Natural killer cell (primary cell): ENCODE measurements at regions of chr20 and their contacts with region 1.

Region 1: GRCh38 chr20:18909254-18909653 is 95.7 kb downstream of the SCP2D1 start:
- DNase-seq: no peak
- ATAC-seq: no peak
- H3K4me3 ChIP-seq: no peak overlapping the region
- H3K4me3 Mint-ChIP-seq: no peak overlapping the region
- H3K27ac ChIP-seq: no peak overlapping the region
- H3K27ac Mint-ChIP-seq: no peak overlapping the region
- H3K4me1 ChIP-seq: no peaks in the 10 kb centered on the region
- H3K4me1 Mint-ChIP-seq: no peaks in the 10 kb centered on the region
- H3K27me3 ChIP-seq: peaks cover 2% of the 10 kb centered on the region
- H3K27me3 Mint-ChIP-seq: peaks cover 17 to 23% of the 10 kb centered on the region in 2 donors
- CTCF ChIP-seq: no peak

Region 2: GRCh38 chr20:18705490-18705889 is 203.8 kb before region 1 on chr20:
- intact Hi-C with region 1: no loop called
- DNase-seq: no peak
- ATAC-seq: no peak
- H3K4me3 ChIP-seq: no peak overlapping the region
- H3K4me3 Mint-ChIP-seq: no peak overlapping the region
- H3K27ac ChIP-seq: no peak overlapping the region
- H3K27ac Mint-ChIP-seq: no peak overlapping the region
- H3K4me1 ChIP-seq: no peaks in the 10 kb centered on the region
- H3K4me1 Mint-ChIP-seq: peaks cover 12 to 15% of the 10 kb centered on the region in 2 donors
- H3K27me3 ChIP-seq: no peaks in the 10 kb centered on the region
- H3K27me3 Mint-ChIP-seq: no peaks in the 10 kb centered on the region
- CTCF ChIP-seq: no peak

Region 3: GRCh38 chr20:18879262-18879661 is 30.0 kb before region 1 on chr20:
- intact Hi-C with region 1: loop called (anchors 1 kb)
- DNase-seq: no peak
- ATAC-seq: no peak
- H3K4me3 ChIP-seq: no peak overlapping the region
- H3K4me3 Mint-ChIP-seq: no peak overlapping the region
- H3K27ac ChIP-seq: no peak overlapping the region
- H3K27ac Mint-ChIP-seq: no peak overlapping the region
- H3K4me1 ChIP-seq: no peaks in the 10 kb centered on the region
- H3K4me1 Mint-ChIP-seq: no peaks in the 10 kb centered on the region
- H3K27me3 ChIP-seq: no peaks in the 10 kb centered on the region
- H3K27me3 Mint-ChIP-seq: peaks cover 5 to 17% of the 10 kb centered on the region in 2 donors
- CTCF ChIP-seq: no peak